Testis (tissue), 5 donors: ENCODE measurements at regions of chr1 and their contacts with region 1.

Region 1: DNA sequence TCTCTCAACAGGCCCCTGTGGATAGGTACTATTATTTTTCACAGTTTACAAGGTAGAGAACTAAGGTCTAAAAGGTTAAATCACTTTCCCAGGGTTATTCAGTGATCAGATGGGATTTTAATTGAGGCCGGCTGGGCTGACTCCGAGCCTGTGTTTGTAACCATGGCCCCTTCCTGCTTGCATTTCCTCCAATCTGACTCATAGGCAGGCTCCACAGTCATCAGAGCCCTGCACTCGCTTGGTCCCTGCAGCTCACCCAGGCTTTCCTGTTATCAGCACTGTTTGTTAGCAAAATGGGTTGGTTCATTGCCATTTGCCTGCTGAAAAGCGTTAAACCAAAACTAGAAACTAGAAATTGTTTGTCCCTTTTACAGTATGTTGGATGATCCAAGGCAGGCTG is 41.4 kb upstream of the LMX1A start:
- DNase-seq: peak; percentile 53
- H3K4me3 ChIP-seq: no peak overlapping the region
- H3K27ac ChIP-seq: peak overlapping the region in 1 of 2 donors; percentile 13
- H3K4me1 ChIP-seq: peaks cover 6% of the 10 kb centered on the region
- H3K27me3 ChIP-seq: no peaks in the 10 kb centered on the region
- CTCF ChIP-seq: no peak
- POLR2A ChIP-seq: no peak

Region 2: GRCh38 chr1:165592945-165593823 is 195.2 kb after region 1 on chr1:
- intact Hi-C with region 1: loop called (anchors 5 kb)
- DNase-seq: peak; percentile 95
- H3K4me3 ChIP-seq: no peak overlapping the region
- H3K27ac ChIP-seq: no peak overlapping the region
- H3K4me1 ChIP-seq: no peaks in the 10 kb centered on the region
- H3K27me3 ChIP-seq: no peaks in the 10 kb centered on the region
- CTCF ChIP-seq: peak; percentile 95 to 98 (median 97)
- POLR2A ChIP-seq: no peak